ENCODE measurements at regions of chr9 and their contacts with region 1.

Region 1: DNA sequence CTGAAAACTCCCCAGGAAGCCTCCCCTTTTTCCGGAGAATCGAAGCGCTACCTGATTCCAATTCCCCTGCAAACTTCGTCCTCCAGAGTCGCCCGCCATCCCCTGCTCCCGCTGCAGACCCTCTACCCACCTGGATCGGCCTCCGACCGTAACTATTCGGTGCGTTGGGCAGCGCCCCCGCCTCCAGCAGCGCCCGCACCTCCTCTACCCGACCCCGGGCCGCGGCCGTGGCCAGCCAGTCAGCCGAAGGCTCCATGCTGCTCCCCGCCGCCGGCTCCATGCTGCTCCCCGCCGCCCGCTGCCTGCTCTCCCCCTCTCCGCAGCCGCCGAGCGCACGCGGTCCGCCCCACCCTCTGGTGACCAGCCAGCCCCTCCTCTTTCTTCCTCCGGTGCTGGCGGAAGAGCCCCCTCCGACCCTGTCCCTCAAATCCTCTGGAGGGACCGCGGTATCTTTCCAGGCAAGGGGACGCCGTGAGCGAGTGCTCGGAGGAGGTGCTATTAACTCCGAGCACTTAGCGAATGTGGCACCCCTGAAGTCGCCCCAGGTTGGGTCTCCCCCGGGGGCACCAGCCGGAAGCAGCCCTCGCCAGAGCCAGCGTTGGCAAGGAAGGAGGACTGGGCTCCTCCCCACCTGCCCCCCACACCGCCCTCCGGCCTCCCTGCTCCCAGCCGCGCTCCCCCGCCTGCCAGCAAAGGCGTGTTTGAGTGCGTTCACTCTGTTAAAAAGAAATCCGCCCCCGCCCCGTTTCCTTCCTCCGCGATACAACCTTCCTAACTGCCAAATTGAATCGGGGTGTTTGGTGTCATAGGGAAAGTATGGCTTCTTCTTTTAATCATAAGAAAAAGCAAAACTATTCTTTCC is 19.4 kb downstream of the CDKN2A start:
- DNase-seq: peak; percentile 70
- ATAC-seq: peak; percentile 68
- H3K4me3 Mint-ChIP-seq: peak overlapping the region; percentile 62
- H3K27ac Mint-ChIP-seq: no peak overlapping the region
- H3K4me1 Mint-ChIP-seq: peaks cover 23% of the 10 kb centered on the region
- H3K27me3 Mint-ChIP-seq: peaks cover 78% of the 10 kb centered on the region

Region 2: GRCh38 chr9:21995177-21996086 is 20.7 kb after region 1 on chr9:
- CTCF ChIA-PET with region 1: interaction called, 4 read pairs
- POLR2A ChIA-PET with region 1: no interaction called
- intact Hi-C with region 1: loop called in 1 of 2 experiments (anchors 2 kb)
- DNase-seq: peak; percentile 82
- ATAC-seq: peak; percentile 75
- H3K4me3 Mint-ChIP-seq: peak overlapping the region; percentile 90
- H3K27ac Mint-ChIP-seq: peak overlapping the region; percentile 37
- H3K4me1 Mint-ChIP-seq: peaks cover 8% of the 10 kb centered on the region
- H3K27me3 Mint-ChIP-seq: peaks cover 37% of the 10 kb centered on the region

Region 3: DNA sequence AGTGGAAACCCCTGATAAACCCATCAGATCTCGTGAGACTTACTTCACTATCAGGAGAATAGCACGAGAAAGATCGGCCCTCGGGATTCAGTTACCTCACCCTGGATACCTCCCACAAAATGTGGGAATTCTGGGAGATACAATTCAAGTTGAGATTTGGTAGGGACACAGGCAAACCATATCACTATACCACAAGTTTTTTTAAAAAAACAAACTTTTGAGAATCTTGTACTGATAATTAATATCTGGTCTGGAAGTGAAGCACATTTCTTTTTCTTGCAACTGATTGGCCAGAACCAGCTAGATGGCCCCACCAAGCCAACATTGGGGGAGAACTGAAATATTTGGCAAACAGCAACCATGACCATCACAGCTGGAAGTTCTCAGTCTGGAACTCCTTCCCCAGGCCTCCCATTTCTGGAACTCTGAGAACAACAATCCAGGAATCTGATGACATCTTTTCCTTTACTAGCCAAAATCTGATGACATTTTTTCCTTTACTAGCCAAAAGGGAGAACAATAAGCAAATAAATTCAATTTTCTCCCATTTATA is 86.1 kb after region 1 on chr9:
- CTCF ChIA-PET with region 1: no interaction called
- POLR2A ChIA-PET with region 1: no interaction called
- intact Hi-C with region 1: no loop called
- DNase-seq: no peak
- ATAC-seq: no peak
- H3K4me3 Mint-ChIP-seq: no peak overlapping the region
- H3K27ac Mint-ChIP-seq: no peak overlapping the region
- H3K4me1 Mint-ChIP-seq: peaks cover 11% of the 10 kb centered on the region
- H3K27me3 Mint-ChIP-seq: peaks cover 24% of the 10 kb centered on the region

Measured in activated CD4-positive, alpha-beta T cell treated with anti-CD3 and anti-CD28 coated beads for 36 hours (primary cell).